PC-9 (cell line): ENCODE measurements at regions of chr3 and their contacts with region 1.

Region 1: DNA sequence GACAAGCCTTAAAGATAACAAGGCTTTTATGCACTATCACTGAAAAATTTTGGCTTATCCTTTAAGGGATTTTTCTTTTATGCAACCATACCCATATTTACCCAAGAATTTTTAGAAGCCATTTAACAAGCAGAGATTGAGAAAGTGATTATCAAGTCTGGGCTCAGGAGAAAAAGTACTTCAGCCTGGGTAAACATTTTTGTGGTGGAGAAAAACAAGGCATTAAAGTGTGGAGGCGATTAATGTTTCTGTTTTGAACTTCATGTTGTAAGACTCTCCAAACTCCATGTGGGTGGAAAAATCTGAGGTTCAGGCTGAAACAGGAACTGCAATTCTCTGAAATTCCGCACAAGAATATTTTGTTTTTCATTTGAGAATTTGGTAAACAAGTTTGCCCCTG is 260.4 kb upstream of the KCNMB2 start:
- DNase-seq: no peak
- H3K4me3 ChIP-seq: no peak overlapping the region
- H3K27ac ChIP-seq: no peak overlapping the region
- H3K4me1 ChIP-seq: no peaks in the 10 kb centered on the region
- H3K27me3 ChIP-seq: no peaks in the 10 kb centered on the region
- CTCF ChIP-seq: no peak

Region 2: GRCh38 chr3:177055605-177056571 is 1219.9 kb before region 1 on chr3:
- CTCF ChIA-PET with region 1: interaction called, 14 read pairs
- POLR2A ChIA-PET with region 1: no interaction called
- intact Hi-C with region 1: no loop called
- DNase-seq: no peak
- H3K4me3 ChIP-seq: no peak overlapping the region
- H3K27ac ChIP-seq: no peak overlapping the region
- H3K4me1 ChIP-seq: peaks cover 14% of the 10 kb centered on the region
- H3K27me3 ChIP-seq: no peaks in the 10 kb centered on the region
- CTCF ChIP-seq: no peak

Region 3: DNA sequence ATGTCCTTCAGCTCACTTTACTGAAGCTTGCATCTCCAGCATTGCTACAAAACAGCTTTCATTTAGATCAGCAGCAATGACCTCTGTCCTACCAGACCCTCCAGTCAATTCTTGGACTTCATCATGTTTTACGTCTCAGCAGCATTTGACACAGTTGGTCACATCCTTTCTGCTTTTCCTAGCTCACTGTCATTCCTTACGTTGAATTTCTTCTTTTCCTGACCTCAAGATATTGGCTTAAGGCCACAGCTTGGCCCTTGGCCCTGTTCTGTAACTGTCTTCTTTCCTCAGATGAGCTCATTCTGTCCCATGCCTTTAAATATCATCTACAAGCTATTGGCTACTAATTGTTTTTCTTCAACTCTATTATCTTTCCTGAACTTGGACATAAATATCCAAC is 315.8 kb before region 1 on chr3:
- CTCF ChIA-PET with region 1: no interaction called
- POLR2A ChIA-PET with region 1: no interaction called
- intact Hi-C with region 1: no loop called
- DNase-seq: no peak
- H3K4me3 ChIP-seq: no peak overlapping the region
- H3K27ac ChIP-seq: no peak overlapping the region
- H3K4me1 ChIP-seq: no peaks in the 10 kb centered on the region
- H3K27me3 ChIP-seq: no peaks in the 10 kb centered on the region
- CTCF ChIP-seq: no peak